IMR-90 (cell line): ENCODE measurements at regions of chr9 and their contacts with region 1.

Region 1: DNA sequence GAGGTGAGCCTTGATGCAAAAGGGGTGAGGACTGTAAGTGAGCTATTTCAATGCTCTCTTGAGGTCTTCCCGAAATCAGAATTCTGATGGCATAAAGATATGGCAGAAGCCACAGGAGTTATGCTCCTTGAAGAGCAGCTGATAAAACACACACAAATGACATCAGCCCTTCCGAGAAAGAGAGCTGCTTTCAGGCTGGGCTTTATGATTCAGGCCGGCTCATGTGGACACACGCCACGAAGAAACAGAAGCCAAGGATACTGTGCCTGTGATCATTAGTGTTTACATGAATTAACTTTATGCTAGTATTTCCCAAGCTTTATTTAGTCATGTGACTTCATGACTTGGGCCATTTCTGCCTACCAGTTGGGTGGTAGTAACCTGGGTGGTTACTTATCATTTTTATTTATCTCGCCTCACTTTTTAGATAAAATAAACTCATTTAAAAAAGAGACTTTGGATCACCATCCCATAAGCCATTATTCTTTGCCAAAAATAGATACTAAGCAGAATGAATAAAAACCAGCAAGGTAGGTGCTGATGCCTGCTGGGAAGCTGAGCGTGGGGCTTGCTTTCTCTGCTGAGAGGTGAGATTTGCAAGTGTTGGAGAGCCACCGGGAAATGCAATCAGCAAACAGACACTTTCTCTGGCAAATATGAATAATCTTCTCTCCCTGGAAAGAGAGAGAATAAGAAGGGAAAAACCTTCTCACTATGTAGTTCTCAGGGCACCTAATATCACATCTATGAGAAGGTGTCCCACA is 73.0 kb upstream of the SLC25A51 start:
- DNase-seq: peak; percentile 97
- ATAC-seq: peak; percentile 91
- H3K4me3 ChIP-seq: no peak overlapping the region
- H3K27ac ChIP-seq: peak overlapping the region; percentile 72
- H3K4me1 ChIP-seq: peaks cover 21% of the 10 kb centered on the region
- H3K27me3 ChIP-seq: no peaks in the 10 kb centered on the region
- CTCF ChIP-seq: no peak
- POLR2A ChIP-seq: no peak
- RAD21 ChIP-seq: peak; percentile 28; the same call in 1 of the 2 replicates

Region 2: GRCh38 chr9:38008168-38009034 is 31.5 kb after region 1 on chr9:
- CTCF ChIA-PET with region 1: no interaction called
- POLR2A ChIA-PET with region 1: no interaction called
- dilution Hi-C with region 1: no loop called
- in situ Hi-C with region 1: no loop called
- intact Hi-C with region 1: loop called (anchors 2 kb)
- DNase-seq: peak; percentile 93
- ATAC-seq: peak; percentile 80
- H3K4me3 ChIP-seq: no peak overlapping the region
- H3K27ac ChIP-seq: peak overlapping the region; percentile 85
- H3K4me1 ChIP-seq: peaks cover 40% of the 10 kb centered on the region
- H3K27me3 ChIP-seq: no peaks in the 10 kb centered on the region
- CTCF ChIP-seq: no peak
- POLR2A ChIP-seq: no peak
- RAD21 ChIP-seq: peak; percentile 27

Region 3: DNA sequence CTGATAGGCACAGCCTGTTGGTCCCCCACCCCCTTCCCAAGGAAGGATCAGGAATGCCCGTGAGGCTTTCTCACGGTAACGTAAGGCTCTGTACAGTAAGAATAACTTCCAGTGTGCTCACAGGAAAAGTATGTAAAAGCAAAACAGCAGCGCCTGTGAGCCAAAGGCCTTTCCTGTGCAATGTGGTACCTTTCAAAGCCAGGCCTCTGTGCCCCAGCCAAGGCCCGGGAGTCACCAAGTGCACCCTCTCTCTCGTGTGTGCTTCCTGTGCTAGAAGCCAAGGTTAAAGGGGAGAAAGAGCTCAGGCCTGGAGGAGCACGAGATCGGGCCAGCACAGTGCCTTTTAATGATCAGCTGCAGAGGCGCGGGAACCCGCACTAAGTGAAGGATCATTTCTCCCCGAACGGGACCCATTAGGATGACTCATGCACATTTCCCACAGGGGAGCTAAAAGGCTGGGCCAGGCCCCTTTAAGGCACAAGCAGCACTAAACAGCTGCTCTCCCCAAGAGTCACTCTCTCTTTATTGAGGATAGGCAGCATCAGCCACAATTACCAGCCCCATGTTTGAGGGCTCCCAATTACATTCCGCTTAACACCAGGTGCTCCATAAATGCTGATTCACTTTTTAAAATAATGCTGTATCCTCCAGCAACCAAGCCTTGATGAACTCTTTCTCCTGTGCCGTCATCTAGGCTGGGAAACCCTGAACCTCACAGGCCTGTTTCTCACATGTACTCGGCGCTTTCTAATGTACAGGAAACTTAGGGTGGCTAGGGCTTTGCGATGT is 49.3 kb after region 1 on chr9:
- CTCF ChIA-PET with region 1: no interaction called
- POLR2A ChIA-PET with region 1: no interaction called
- dilution Hi-C with region 1: no loop called
- in situ Hi-C with region 1: no loop called
- intact Hi-C with region 1: loop called (anchors 5 kb)
- DNase-seq: peak; percentile 98
- ATAC-seq: peak; percentile 77
- H3K4me3 ChIP-seq: no peak overlapping the region
- H3K27ac ChIP-seq: peak overlapping the region; percentile 96
- H3K4me1 ChIP-seq: peaks cover 59% of the 10 kb centered on the region
- H3K27me3 ChIP-seq: no peaks in the 10 kb centered on the region
- CTCF ChIP-seq: no peak
- POLR2A ChIP-seq: no peak; the same call in 1 of the 2 replicates
- RAD21 ChIP-seq: peak; percentile 28

Region 4: DNA sequence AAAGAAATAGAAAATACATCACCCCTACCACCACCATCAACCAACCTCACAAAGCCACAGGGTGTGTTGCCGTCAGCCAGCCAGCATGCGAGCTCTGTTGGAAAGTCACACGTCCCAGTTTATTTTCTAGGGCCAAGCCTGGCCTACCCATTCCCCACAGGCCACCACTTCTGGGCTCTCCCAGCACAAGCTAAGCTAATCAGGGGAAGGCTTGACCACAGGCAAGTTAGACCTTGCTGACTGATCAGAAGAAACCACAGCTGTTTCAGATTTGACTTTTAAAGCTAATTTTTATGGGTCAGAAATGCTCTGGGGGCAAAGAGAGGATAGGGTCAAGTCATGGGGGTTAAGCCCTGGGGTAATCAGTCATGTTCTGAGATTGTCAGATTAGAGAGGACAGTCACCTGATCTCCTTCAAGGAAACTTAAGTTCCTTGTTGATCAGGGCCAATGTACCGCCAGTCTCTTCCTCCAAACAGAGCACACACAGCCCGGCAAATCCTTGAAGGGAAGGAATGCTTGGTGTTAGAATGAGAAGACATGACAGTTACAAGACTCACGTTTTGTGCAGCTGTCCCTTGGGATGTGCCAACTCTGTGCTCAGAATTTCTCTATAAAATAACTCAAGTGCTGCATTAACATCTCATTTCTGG is 84.6 kb after region 1 on chr9:
- CTCF ChIA-PET with region 1: no interaction called
- POLR2A ChIA-PET with region 1: no interaction called
- dilution Hi-C with region 1: no loop called
- in situ Hi-C with region 1: no loop called
- intact Hi-C with region 1: loop called (anchors 2 kb)
- DNase-seq: no peak
- ATAC-seq: no peak
- H3K4me3 ChIP-seq: no peak overlapping the region
- H3K27ac ChIP-seq: peak overlapping the region; percentile 24; the same call in 1 of the 2 replicates
- H3K4me1 ChIP-seq: peaks cover 52% of the 10 kb centered on the region
- H3K27me3 ChIP-seq: no peaks in the 10 kb centered on the region
- CTCF ChIP-seq: no peak
- POLR2A ChIP-seq: no peak
- RAD21 ChIP-seq: no peak

Region 5: DNA sequence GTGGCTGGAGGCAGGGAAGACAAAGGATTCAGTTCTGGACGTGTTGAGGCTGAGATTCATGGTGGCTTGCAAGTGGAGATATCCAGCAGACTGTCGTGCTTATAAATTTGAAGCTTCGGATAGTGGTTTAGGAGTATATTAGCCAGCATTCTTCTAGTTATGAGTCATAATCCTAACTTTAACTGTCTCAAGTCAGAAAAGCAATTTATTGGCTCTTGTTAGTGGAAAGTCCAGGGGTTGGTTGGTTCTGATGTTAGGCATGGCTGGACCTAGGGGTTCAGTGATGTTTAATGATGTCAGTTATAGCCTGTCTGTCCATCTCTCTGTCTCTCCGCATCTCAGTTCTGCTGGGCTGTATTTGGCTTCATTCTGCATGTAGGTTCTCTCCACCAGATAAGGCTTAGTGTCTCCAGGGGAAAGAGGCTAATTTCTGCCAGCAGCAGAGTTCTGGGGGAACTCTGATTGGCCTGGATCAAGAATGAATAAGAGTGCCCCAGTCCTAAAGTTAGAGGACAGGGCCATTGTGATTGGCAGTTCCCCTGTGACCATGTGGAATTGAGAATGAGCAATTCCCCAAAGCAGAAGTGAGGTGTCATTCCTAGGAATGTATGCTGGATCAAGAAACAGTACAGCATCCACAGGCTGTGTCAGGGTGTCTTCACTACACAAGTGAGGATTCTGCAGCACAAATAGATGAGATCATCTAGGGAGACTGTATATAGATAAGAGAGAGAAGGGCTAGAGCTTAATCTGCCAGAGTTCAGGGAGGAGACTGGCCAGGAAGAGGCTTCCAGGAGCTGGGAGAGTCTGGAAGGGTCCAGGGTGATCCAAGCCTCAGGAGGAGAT is 165.1 kb after region 1 on chr9:
- CTCF ChIA-PET with region 1: no interaction called
- POLR2A ChIA-PET with region 1: no interaction called
- dilution Hi-C with region 1: no loop called
- in situ Hi-C with region 1: no loop called
- intact Hi-C with region 1: loop called (anchors 5 kb)
- DNase-seq: peak; percentile 83
- ATAC-seq: peak; percentile 88
- H3K4me3 ChIP-seq: no peak overlapping the region
- H3K27ac ChIP-seq: peak overlapping the region; percentile 50
- H3K4me1 ChIP-seq: peaks cover 13% of the 10 kb centered on the region
- H3K27me3 ChIP-seq: peaks cover 20% of the 10 kb centered on the region
- CTCF ChIP-seq: no peak
- POLR2A ChIP-seq: no peak
- RAD21 ChIP-seq: no peak